ENCODE measurements at regions of chr18 and their contacts with region 1.

Region 1: DNA sequence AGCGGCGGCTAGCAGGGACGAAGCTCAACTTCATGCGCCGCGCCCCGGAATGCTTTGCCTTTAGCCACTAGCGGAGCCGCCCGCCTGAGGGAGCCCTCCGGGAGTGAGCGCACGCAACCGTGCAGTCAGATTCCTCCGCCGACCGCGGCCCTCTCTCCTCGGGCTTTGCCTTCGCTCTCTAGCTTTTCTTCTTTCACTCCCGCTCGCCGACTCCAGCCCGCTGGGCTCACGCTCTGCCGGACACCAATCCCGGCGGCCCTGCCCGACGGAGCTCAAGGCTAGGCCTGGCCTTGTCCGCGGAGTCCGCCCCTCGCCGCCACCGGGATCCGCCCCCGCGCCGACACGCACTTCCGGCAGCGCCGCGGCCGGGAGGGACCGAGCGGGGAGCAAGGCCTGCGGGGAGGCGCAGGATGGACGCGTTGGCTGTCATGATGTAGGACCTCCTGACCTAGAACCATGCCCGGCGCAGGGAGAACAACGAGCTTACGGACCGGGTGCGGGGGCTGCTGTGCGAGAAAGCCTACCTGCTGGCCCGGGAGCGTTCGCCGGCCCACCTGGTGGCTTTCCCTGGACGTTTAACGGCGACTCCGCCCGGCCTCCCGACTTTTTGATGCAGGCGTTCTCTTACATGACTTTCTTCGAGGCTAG is 40.8 kb upstream of the AKAIN1 start:
- DNase-seq: peak; percentile 86 to 88
- H3K4me3 ChIP-seq: peak overlapping the region; percentile 48 to 81 (median 68)
- H3K27ac ChIP-seq: peak overlapping the region; percentile 94 to 99 (median 98)
- H3K4me1 ChIP-seq: peaks cover 13 to 15% of the 10 kb centered on the region in 2 donors
- H3K27me3 ChIP-seq: no peaks in the 10 kb centered on the region
- CTCF ChIP-seq: peak in 2 of 6 experiments; percentile 28 to 30
- POLR2A ChIP-seq: peak in 1 of 2 donors; percentile 89

Region 2: GRCh38 chr18:4908328-4908727 is 329.5 kb before region 1 on chr18:
- intact Hi-C with region 1: no loop called
- DNase-seq: no peak
- H3K4me3 ChIP-seq: no peak overlapping the region
- H3K27ac ChIP-seq: no peak overlapping the region
- H3K4me1 ChIP-seq: no peaks in the 10 kb centered on the region
- H3K27me3 ChIP-seq: no peaks in the 10 kb centered on the region
- CTCF ChIP-seq: no peak
- POLR2A ChIP-seq: no peak

Region 3: DNA sequence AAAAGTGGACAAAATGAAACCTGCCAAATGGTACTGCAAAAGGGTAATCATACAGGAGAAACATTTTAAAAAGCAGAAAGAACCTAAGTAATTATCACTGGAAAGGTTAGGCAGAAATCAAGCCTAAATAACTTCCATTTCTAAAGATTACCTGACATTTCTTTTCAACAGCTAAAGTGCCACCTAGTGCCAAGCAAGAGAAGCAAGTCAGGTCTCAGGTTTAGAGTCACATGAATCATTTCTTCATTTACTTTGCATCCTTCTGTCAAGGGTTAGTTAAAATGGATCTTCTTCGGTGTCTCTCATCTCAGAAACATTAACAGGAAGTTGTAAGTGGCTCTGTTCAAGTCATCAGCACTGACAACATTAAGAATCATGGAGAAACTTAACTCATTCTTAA is 131.1 kb before region 1 on chr18:
- intact Hi-C with region 1: no loop called
- DNase-seq: no peak
- H3K4me3 ChIP-seq: no peak overlapping the region
- H3K27ac ChIP-seq: no peak overlapping the region
- H3K4me1 ChIP-seq: no peaks in the 10 kb centered on the region
- H3K27me3 ChIP-seq: no peaks in the 10 kb centered on the region
- CTCF ChIP-seq: no peak
- POLR2A ChIP-seq: no peak

Region 4: DNA sequence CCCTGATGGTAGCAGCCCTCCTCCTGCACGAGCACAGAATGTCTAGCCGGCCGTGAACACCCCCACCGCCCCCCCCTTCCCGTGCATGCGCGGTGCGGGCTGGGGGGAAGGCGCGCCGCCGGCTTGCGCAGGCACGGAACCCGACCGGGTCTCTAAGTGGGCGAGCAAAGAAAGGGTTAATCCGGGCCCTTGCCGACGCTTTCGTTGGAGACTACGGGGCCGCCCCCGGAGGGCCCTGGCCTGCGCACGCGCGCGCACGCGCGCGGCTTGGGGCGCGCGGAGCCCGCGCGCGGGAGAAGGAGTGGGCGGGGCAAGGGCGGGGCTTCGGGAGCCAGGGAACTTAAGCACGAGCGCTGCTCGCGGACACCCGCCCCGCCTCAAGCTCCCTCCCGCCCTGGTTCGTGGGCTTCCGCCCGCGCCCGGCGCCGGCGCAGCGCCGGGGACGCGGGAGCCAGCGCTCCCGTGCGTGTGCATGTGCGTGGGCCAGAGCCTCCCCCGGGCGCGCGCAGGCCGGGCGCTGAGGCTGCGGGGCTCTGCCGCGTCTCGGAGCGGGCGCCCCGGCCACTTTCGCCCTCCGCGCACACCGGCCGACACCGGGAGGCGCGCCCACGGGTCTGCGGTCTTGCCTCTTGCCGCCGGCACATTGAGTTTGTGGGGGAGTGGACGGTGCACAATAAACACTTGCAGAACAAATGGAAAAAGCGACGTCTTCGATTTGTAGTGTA is 58.3 kb after region 1 on chr18:
- intact Hi-C with region 1: loop called (anchors 5 kb)
- DNase-seq: peak; percentile 95
- H3K4me3 ChIP-seq: peak overlapping the region; percentile 8 to 99 (median 38)
- H3K27ac ChIP-seq: peak overlapping the region; percentile 95 to 98 (median 98)
- H3K4me1 ChIP-seq: no peaks in the 10 kb centered on the region
- H3K27me3 ChIP-seq: no peaks in the 10 kb centered on the region
- CTCF ChIP-seq: no peak
- POLR2A ChIP-seq: peak in 1 of 2 donors; percentile 66

Region 5: DNA sequence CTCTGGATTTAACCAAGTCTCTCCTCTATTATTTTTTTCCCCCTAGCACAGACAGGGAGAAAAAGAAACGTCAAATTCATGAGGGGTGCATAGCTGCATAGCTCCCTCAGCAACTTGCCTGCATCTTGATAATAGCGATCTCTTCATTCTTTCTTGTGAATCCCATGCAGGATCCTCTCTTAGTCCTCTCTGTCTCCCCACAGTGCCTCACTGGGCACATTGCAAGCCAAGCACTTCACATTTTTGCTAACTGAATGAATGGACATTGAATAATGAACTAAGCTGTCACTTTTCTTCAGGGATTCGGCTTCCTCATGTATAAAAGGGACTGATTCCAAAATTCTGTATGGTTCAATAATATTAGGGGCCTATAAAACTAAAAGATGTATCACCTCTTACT is 308.8 kb after region 1 on chr18:
- intact Hi-C with region 1: no loop called
- DNase-seq: peak in 1 of 2 donors; percentile 7
- H3K4me3 ChIP-seq: no peak overlapping the region
- H3K27ac ChIP-seq: no peak overlapping the region
- H3K4me1 ChIP-seq: peaks cover 3 to 5% of the 10 kb centered on the region in 2 donors
- H3K27me3 ChIP-seq: no peaks in the 10 kb centered on the region
- CTCF ChIP-seq: peak in 1 of 6 experiments; percentile 45
- POLR2A ChIP-seq: no peak

Measured in thyroid gland (tissue), 4 donors.